ENCODE measurements at regions of chr2 and their contacts with region 1.

Region 1: GRCh38 chr2:176001916-176002687 is at the start of gene LNPK:
- DNase-seq: peak; percentile 97
- ATAC-seq: peak; percentile 98
- total RNA-seq, gene LNPK: 38.8 TPM

Region 2: DNA sequence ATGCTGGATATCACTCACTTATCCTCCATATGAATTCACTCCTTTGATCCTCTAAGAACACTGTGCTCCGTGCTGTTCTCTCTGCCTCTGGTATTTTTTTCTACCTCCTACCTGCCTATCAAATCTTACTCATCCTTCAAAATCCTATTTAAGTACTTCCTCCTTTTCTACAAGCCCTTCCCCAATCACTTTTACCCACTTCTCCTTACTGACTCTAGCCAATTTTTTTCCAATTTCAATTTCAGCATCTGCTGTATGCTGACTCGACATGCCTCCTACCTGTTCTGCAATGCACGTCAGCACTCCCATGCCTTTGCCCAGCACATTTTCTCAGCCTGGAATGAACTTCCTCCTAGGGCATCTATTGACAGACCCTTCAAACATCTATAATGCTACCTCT is 37.3 kb after region 1 on chr2:
- intact Hi-C with region 1: loop called (anchors 1 kb)
- DNase-seq: no peak
- ATAC-seq: no peak

Region 3: GRCh38 chr2:176056406-176056805 is 54.3 kb after region 1 on chr2:
- intact Hi-C with region 1: no loop called
- DNase-seq: no peak
- ATAC-seq: no peak

Region 4: DNA sequence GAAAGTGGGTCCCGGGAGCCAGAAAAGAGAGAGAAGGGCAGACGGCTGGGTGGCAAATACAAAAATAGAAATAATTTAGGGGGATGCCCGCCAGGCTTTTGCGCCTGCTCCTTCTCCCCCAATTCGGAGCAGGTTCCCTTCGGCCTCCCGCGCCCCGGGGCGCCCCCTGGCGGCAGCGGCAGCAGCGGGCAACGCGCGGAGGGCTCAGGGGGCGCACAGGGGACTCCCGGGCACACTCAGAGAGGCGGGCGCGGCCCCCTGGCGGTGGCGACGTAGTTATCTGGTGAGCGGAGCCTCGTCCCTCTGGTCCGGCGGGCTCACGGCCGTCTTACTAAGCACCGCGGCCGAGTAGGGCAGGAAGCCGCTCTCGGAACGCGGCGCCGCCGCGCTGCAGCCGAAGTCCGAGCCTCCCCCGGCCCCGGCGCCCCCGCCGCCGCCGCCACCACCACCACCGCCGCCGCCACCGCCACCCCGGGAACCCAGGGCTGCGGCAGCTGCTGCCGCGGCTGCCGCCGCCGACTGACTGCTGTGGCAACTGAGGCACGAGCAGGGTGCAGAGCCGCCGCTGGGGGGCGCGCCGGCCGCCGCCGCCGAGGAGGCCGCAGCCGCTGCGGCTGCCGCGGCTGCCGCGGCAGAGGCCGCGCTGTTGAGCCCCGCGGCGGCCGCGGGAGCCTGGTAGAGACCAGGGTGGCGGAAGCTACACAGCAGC is 77.9 kb after region 1 on chr2:
- intact Hi-C with region 1: loop called (anchors 5 kb)
- DNase-seq: peak; percentile 73
- ATAC-seq: peak; percentile 37

Region 5: DNA sequence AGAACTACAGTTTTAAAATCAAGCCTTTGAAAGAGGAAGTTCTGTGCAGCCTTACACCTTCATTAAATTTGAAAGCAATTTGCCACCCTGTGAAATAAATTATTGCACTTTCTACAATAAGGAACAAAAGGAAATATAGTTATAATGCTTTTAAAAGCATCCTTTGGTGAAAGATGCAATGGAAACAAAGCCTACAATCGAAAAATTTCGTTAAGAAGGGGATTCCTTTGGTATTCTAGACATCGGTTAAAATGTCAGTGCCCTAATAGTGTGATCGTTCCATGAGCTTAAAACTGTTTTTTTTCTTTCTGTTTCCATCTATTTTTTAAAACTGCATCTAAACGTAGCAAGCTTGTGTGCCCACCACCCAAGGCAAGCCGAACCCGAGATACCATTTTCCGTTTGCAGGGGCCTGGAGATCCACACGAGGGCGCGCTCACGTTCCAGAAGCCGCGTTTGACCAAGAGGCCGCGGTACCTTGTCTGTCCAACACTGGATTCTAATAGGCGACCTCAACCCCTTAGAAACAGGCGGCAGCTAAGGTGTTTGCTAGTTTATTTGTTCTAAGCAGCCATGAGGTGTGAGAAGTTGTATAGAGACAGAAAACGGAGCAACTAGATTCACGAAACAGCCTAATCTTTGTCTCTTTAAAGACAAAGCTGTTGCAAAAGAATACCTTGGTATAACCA is 109.0 kb after region 1 on chr2:
- intact Hi-C with region 1: no loop called
- DNase-seq: no peak
- ATAC-seq: no peak